ENCODE measurements at regions of chr3 and their contacts with region 1.

Region 1: DNA sequence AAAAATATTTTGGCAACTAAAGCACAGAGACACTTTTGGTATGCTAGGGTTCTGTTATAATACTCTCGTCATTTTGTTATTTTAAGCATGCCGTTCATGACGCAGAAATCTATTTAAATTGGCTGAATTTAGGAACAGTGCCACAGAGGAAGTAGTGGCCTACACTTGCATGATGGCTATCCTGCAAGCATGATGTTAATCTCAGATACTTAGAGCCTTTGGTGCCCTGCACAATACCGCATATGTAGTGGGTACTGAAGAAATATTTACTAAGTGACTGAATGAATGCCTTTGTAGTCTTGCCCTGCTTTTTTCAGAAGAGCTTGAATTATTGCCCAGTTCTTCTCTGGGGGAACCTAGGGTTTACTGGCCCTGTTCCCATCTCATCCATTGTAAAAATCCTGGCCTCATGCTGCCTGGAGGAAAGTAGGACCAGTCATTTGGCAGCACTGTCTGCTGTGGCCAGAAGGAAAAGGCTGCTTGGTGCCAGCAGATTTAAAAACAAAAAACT is 79.0 kb downstream of the SERPINI1 start:
- DNase-seq: no peak
- ATAC-seq: peak; percentile 82

Region 2: GRCh38 chr3:167684388-167684993 is 130.0 kb before region 1 on chr3:
- intact Hi-C with region 1: no loop called
- DNase-seq: no peak
- ATAC-seq: no peak

Region 3: DNA sequence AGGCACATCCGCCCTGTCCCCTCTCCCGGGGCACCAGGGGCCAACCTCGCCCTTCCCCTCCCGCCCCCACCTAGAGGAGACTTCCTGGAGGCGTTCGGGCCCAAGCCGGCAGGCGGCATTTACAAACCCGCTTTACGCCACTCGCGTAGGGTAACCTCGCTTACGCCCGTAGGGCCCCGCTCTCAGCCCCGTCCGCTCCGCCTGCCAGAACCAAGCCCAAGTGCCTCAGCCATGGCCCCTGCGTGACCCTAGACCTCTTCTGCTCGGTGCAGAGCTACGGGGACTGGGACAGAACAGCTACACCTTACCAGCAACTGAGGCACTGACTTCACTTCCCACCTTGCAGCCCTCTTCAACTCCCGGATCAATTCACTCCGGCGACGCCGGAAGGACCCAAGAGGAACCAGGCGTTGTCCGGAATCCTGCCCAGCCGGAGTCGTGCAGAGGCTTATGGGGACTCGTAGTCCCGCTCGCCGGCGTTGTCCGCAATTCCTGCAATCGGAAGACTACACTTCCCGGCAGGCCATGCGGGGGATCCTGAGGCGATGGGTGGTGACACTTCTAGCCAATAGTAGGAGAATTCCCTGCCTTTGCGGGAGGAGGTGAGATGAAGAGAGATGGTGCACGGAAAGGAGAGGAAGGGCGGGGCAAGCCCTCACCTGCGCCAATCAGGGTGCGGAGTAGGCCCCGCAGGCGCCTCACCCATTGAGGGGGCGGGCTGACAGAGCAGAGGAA is 79.8 kb before region 1 on chr3 and contains the start of gene PDCD10:
- intact Hi-C with region 1: loop called (anchors 5 kb)
- DNase-seq: peak; percentile 99
- ATAC-seq: peak; percentile 98
- total RNA-seq, gene PDCD10: 31.2 TPM

Region 4: GRCh38 chr3:167929968-167930367 is 115.5 kb after region 1 on chr3:
- intact Hi-C with region 1: no loop called
- DNase-seq: no peak
- ATAC-seq: peak; percentile 70